Vagina (tissue), 2 donors: ENCODE measurements at regions of chr7 and their contacts with region 1.

Region 1: DNA sequence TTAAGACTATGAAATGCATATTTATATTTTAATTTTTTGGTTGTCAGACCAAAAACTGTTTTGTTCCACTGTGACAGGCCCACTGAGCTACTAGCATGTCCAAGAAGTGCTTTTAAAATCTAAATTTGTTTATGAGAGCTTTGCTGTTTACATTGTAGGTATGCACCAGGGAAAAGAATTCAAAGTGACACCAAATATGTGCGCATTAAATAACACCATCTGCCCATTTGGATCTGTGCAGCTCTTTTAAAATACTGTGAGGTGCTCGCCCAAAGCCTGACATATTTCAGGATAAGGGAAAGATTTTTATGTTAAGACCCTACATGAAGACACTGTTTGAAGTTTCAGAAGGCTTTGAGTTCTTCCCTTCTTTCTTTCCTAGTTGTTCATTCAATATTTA is 162.9 kb downstream of the ST7 start:
- DNase-seq: no peak
- H3K4me3 ChIP-seq: no peak overlapping the region
- H3K27ac ChIP-seq: no peak overlapping the region
- H3K4me1 ChIP-seq: no peaks in the 10 kb centered on the region
- H3K27me3 ChIP-seq: no peaks in the 10 kb centered on the region
- CTCF ChIP-seq: no peak
- POLR2A ChIP-seq: no peak

Region 2: GRCh38 chr7:116988363-116988989 is 127.7 kb before region 1 on chr7:
- intact Hi-C with region 1: loop called (anchors 2 kb)
- DNase-seq: no peak
- H3K4me3 ChIP-seq: no peak overlapping the region
- H3K27ac ChIP-seq: no peak overlapping the region
- H3K4me1 ChIP-seq: no peaks in the 10 kb centered on the region
- H3K27me3 ChIP-seq: no peaks in the 10 kb centered on the region
- CTCF ChIP-seq: peak in 1 of 3 experiments; percentile 10
- POLR2A ChIP-seq: no peak

Region 3: DNA sequence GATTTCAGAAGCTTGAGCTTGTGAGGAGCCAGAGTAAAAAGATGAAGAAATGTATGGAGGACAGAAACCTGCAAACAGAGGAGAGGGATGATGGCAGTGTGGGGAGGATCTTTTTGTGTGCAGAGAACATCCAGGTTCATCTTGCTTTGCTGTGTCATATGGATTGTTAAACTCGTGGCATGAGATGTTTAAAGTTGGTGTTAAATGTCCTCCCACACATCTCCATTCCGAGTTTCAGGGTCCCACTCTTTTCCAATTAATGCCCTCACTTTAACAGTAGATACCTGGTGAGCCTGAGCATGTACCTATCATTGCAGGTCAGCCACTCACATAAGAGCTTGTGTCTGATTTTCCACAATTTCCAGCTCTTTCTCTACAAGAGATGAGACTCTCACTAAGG is 15.2 kb before region 1 on chr7:
- intact Hi-C with region 1: no loop called
- DNase-seq: no peak
- H3K4me3 ChIP-seq: no peak overlapping the region
- H3K27ac ChIP-seq: no peak overlapping the region
- H3K4me1 ChIP-seq: no peaks in the 10 kb centered on the region
- H3K27me3 ChIP-seq: no peaks in the 10 kb centered on the region
- CTCF ChIP-seq: no peak
- POLR2A ChIP-seq: no peak

Region 4: DNA sequence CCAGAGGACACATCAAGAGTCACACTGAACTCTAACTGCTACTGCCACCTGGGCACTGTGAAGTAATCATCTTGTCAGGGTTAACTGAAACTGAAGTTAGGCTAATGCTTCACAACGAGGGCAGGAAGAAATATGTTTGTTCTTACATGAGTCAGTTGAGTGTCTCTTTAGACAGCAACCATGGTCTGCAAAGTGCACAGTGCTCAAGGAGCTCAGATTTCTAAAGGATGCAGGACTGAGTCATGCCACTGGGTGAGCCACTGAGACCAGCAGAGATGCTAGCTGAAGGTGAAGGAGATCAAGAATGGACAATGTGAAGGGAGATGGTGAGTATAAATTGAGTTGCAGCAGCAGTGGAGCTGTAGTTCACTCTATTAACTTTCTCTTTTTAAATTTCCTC is 833.0 kb after region 1 on chr7:
- intact Hi-C with region 1: no loop called
- DNase-seq: no peak
- H3K4me3 ChIP-seq: no peak overlapping the region
- H3K27ac ChIP-seq: no peak overlapping the region
- H3K4me1 ChIP-seq: no peaks in the 10 kb centered on the region
- H3K27me3 ChIP-seq: no peaks in the 10 kb centered on the region
- CTCF ChIP-seq: no peak
- POLR2A ChIP-seq: no peak